ENCODE measurements at regions of chr9 and their contacts with region 1.

Region 1: GRCh38 chr9:129884220-129885017 is 49.2 kb downstream of the USP20 start:
- DNase-seq: peak; percentile 94
- H3K4me3 ChIP-seq: peak overlapping the region in 3 of 4 donors; percentile 26 to 36 (median 36)
- H3K27ac ChIP-seq: peak overlapping the region; percentile 79 to 88 (median 86)
- H3K4me1 ChIP-seq: peaks cover 0 to 77% (median 66%) of the 10 kb centered on the region in 4 donors
- H3K27me3 ChIP-seq: no peaks in the 10 kb centered on the region
- CTCF ChIP-seq: no peak
- EP300 ChIP-seq: no peak
- POLR2A ChIP-seq: peak in 1 of 2 donors; percentile 26

Region 2: DNA sequence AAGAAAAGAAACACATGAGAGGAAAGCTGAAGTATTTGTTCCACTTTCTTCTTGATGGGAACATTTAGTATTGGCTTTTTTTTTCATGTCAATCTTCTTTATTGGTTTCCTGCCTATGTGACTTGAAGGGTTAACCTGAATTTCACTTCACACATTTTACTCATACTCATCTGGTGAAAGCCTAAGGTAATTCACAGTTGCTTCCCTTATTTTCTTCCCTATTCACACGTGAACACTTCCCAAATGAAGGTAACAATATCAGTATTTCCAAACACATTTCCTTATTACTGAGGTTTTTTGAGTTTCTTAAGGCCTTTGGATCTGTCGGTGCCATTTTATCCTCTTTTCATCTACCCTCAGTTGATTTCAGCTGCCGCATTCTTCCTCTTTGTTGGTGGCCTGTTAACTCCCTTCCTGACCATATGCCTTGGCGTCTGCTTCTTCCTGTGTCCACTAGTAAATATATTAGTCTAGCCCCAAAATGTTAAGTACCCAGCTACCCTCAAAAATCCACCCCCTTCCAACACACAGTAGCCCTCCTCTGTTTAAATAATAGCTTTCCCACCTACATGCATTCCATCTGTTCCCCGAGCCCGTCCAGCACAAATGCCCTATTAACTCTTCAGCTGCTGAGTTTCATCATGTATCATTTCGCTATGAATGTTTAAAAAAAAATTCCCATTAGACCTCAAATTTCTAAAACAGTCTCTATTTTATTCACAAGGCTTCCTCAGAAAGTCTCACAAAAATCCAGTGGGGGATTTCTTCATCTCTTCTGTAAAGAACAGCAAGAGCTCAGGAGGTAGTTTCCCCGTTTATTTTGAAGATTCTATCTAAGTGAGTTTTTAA is 48.1 kb after region 1 on chr9:
- intact Hi-C with region 1: loop called (anchors 5 kb)
- DNase-seq: no peak
- H3K4me3 ChIP-seq: peak overlapping the region in 3 of 4 donors; percentile 2 to 6 (median 4)
- H3K27ac ChIP-seq: peak overlapping the region; percentile 75 to 88 (median 82)
- H3K4me1 ChIP-seq: peaks cover 0 to 67% (median 53%) of the 10 kb centered on the region in 4 donors
- H3K27me3 ChIP-seq: no peaks in the 10 kb centered on the region
- CTCF ChIP-seq: no peak
- EP300 ChIP-seq: no peak
- POLR2A ChIP-seq: no peak

Region 3: GRCh38 chr9:129962889-129963703 is 78.7 kb after region 1 on chr9:
- intact Hi-C with region 1: loop called (anchors 5 kb)
- DNase-seq: peak; percentile 86
- H3K4me3 ChIP-seq: peak overlapping the region; percentile 32 to 53 (median 46)
- H3K27ac ChIP-seq: peak overlapping the region; percentile 88 to 94 (median 91)
- H3K4me1 ChIP-seq: peaks cover 0 to 70% (median 58%) of the 10 kb centered on the region in 4 donors
- H3K27me3 ChIP-seq: no peaks in the 10 kb centered on the region
- CTCF ChIP-seq: no peak
- EP300 ChIP-seq: no peak
- POLR2A ChIP-seq: peak; percentile 53 to 57

Region 4: GRCh38 chr9:130042833-130043653 is 158.6 kb after region 1 on chr9 and contains the start of gene FNBP1:
- intact Hi-C with region 1: loop called (anchors 1 kb)
- DNase-seq: peak; percentile 92
- H3K4me3 ChIP-seq: peak within 1 kb of the TSS; percentile 74 to 94 (median 84)
- H3K27ac ChIP-seq: peak within 1 kb of the TSS; percentile 94 to 99 (median 96)
- H3K4me1 ChIP-seq: peaks cover 0 to 55% (median 48%) of the 10 kb centered on the region in 4 donors
- H3K27me3 ChIP-seq: no peaks in the 10 kb centered on the region
- CTCF ChIP-seq: no peak
- EP300 ChIP-seq: no peak
- POLR2A ChIP-seq: peak; percentile 76 to 77
- total RNA-seq, gene FNBP1: 92.8 to 172 (median 104) TPM

Region 5: GRCh38 chr9:130107234-130107861 is 222.9 kb after region 1 on chr9:
- intact Hi-C with region 1: loop called (anchors 5 kb)
- DNase-seq: peak; percentile 94
- H3K4me3 ChIP-seq: no peak overlapping the region
- H3K27ac ChIP-seq: peak overlapping the region; percentile 69 to 90 (median 79)
- H3K4me1 ChIP-seq: peaks cover 0 to 41% (median 32%) of the 10 kb centered on the region in 4 donors
- H3K27me3 ChIP-seq: no peaks in the 10 kb centered on the region
- CTCF ChIP-seq: peak; percentile 80 to 87 (median 86)
- EP300 ChIP-seq: no peak
- POLR2A ChIP-seq: no peak

Region 6: GRCh38 chr9:130235897-130236668 is 351.7 kb after region 1 on chr9:
- intact Hi-C with region 1: loop called (anchors 5 kb)
- DNase-seq: peak; percentile 86
- H3K4me3 ChIP-seq: no peak overlapping the region
- H3K27ac ChIP-seq: peak overlapping the region; percentile 75 to 92 (median 82)
- H3K4me1 ChIP-seq: peaks cover 0 to 54% (median 45%) of the 10 kb centered on the region in 4 donors
- H3K27me3 ChIP-seq: no peaks in the 10 kb centered on the region
- CTCF ChIP-seq: peak; percentile 97 to 100 (median 100)
- EP300 ChIP-seq: peak in 2 of 4 donors; percentile 47
- POLR2A ChIP-seq: no peak

Region 7: GRCh38 chr9:130327070-130327780 is 442.8 kb after region 1 on chr9:
- intact Hi-C with region 1: loop called (anchors 10 kb)
- DNase-seq: no peak
- H3K4me3 ChIP-seq: no peak overlapping the region
- H3K27ac ChIP-seq: peak overlapping the region; percentile 86 to 99 (median 92)
- H3K4me1 ChIP-seq: peaks cover 0 to 84% (median 70%) of the 10 kb centered on the region in 4 donors
- H3K27me3 ChIP-seq: no peaks in the 10 kb centered on the region
- CTCF ChIP-seq: peak in 2 of 4 experiments; percentile 31 to 47
- EP300 ChIP-seq: no peak
- POLR2A ChIP-seq: no peak

Measured in sigmoid colon (tissue), 7 donors.